Heart left ventricle (tissue), 16 donors: ENCODE measurements at regions of chr6 and their contacts with region 1.

Region 1: DNA sequence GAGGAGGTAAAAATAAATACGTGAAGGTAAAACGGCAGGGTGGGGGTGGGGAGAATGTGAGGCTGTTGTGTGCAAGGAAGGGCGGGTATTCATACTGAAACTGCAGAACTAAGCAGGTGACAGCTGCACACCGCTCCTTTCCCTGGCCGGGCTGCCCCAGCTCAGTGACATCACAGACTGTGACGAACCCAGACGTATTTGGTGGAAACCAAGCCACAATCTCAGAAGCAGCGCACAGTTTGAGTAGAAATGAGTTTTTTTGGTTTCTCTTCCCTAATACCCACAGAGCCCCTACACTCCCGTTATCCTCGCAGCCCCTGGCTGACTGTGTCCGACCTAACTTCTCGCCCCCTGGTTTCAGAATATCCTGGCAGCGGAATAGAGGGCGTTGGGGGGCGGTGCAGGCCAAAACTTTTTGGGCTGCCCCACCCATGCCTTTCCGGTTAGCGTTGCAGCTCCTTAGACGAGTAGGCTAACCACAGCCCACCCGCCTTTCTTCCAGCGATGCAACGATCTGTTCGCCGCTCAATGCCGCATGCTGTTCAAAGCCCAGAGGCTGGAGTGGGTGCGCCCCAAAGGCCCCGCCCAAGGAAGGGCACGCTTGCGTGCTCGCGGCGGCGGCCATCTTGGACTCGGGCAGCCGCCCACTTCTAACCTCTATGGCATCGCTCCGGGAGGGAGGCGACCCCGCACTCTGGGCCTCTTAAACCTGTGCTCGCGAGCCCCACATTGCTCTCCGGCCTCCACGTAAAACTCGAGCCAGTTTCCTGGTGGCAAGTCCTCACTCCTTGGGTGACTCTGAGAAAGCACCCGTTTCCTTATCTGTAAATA is 9.1 kb downstream of the BAK1 start:
- DNase-seq: peak; percentile 84 to 90 (median 87)
- ATAC-seq: peak; percentile 93 to 97 (median 94)
- H3K4me3 ChIP-seq: peak overlapping the region; percentile 39 to 75 (median 67)
- H3K27ac ChIP-seq: peak overlapping the region; percentile 70 to 92 (median 88)
- H3K4me1 ChIP-seq: peaks cover 0 to 16% (median 7%) of the 10 kb centered on the region in 12 donors
- H3K27me3 ChIP-seq: no peaks in the 10 kb centered on the region
- CTCF ChIP-seq: peak in 1 of 12 donors; percentile 17
- POLR2A ChIP-seq: peak in 1 of 2 donors; percentile 42

Region 2: GRCh38 chr6:33172688-33173534 is 398.1 kb before region 1 on chr6:
- intact Hi-C with region 1: no loop called
- DNase-seq: no peak
- ATAC-seq: no peak
- H3K4me3 ChIP-seq: no peak overlapping the region
- H3K27ac ChIP-seq: no peak overlapping the region
- H3K4me1 ChIP-seq: no peaks in the 10 kb centered on the region
- H3K27me3 ChIP-seq: no peaks in the 10 kb centered on the region
- CTCF ChIP-seq: peak in 10 of 12 donors; percentile 28 to 54 (median 36)
- POLR2A ChIP-seq: no peak

Region 3: DNA sequence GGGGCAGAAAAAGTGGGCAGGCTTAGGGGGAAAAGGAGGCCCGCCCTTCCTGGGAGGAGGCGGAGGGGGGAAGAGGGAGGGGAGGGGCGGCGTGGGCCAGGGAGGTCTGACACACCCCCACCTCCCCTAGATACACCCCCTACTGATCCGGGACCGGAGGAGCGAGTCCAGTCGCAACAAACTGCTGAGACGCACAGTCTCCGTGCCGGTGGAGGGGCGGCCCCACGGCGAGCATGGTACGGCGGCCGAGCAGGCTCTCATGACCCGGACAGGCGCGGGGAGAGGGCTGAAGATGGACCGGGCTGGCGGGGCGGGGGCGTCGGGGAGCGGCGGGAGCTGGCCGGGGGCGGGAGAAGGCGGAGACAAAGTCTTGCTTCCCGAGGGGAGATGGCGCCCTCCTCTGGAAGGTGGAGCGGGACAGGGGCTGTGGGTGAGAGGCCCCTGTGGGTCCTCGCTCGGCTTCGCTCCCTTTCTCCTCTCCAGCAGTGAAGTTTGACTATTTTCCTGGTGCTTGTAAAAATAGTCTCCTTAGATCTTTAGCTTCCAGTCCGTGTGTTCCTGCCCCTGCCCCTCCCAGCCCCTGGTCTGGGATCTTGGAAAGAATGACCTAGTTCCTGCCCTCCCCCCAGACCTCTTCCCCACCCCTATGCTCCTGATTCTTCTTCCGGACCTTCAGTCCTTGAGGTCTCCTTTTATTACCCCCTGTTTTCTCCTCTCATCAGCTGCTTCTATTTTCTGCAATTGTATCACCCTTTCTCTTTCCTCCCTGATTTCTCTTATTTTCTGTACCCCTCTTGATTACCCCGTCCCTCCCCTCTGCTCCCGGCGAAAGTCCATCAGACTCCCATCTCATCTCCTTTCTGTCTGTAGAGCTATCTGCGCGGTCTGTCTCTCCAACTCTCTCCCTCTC is 145.1 kb before region 1 on chr6:
- intact Hi-C with region 1: loop called in 3 of 10 experiments (anchors 2 to 10 kb)
- DNase-seq: peak; percentile 90 to 92 (median 90)
- ATAC-seq: peak; percentile 73 to 85 (median 82)
- H3K4me3 ChIP-seq: peak overlapping the region; percentile 40 to 76 (median 68)
- H3K27ac ChIP-seq: peak overlapping the region; percentile 82 to 98 (median 94)
- H3K4me1 ChIP-seq: peaks cover 0 to 60% (median 46%) of the 10 kb centered on the region in 12 donors
- H3K27me3 ChIP-seq: no peaks in the 10 kb centered on the region
- CTCF ChIP-seq: peak; percentile 29 to 76 (median 60)
- POLR2A ChIP-seq: no peak

Region 4: GRCh38 chr6:33732826-33733708 is 162.0 kb after region 1 on chr6:
- intact Hi-C with region 1: no loop called
- DNase-seq: no peak
- ATAC-seq: no peak
- H3K4me3 ChIP-seq: no peak overlapping the region
- H3K27ac ChIP-seq: peak overlapping the region; percentile 42 to 91 (median 82)
- H3K4me1 ChIP-seq: peaks cover 0 to 94% (median 36%) of the 10 kb centered on the region in 12 donors
- H3K27me3 ChIP-seq: no peaks in the 10 kb centered on the region
- CTCF ChIP-seq: no peak
- POLR2A ChIP-seq: no peak